ENCODE measurements at regions of chr16 and their contacts with region 1.

Region 1: DNA sequence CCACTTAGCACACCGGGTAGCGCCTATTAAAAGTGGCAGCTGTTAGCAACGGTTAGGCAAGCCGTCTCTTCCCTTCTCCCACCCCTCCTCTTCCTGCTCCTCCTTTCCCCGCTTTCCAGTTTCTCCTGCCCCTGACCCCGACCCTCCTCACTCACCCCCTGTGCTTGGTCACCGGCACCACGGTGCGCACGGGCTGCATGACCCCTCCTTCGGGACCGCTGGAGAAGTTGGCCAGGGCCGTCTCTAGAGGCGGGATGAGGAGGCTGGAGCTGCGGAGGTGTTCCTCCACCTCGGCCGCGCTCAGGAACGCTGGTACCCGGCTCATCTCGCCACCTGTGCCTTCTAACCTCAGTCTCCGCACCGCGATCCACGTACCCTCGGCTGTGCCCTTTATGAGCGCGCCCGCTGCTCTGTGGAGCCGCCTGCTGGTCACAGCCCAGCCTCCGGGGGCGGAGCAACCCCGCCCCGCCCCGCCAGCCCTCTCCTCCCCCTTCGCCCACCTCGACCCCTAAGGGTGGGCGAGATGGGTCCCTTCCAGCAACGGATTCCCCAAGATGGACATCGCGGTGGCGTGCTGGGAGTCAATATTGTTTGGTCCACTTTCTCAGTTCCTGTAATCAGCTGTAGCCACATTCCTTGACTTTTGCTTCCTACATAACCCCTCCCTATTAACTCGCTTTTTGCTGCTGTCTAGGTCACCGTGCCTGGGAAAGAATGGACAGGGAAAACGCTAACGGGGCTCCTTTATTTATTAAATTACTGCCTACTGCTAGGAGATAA is at the start of gene CRYM:
- DNase-seq: peak; percentile 12
- H3K4me3 ChIP-seq: peak within 1 kb of the TSS; percentile 37
- H3K27ac ChIP-seq: no peak within 1 kb of the TSS
- H3K27me3 ChIP-seq: peaks cover 40% of the 10 kb centered on the region
- CTCF ChIP-seq: peak; percentile 80

Region 2: GRCh38 chr16:21194771-21195301 is 83.3 kb before region 1 on chr16:
- in situ Hi-C with region 1: loop called (anchors 25 kb)
- DNase-seq: peak; percentile 24
- H3K4me3 ChIP-seq: no peak overlapping the region
- H3K27ac ChIP-seq: no peak overlapping the region
- H3K27me3 ChIP-seq: peaks cover 3% of the 10 kb centered on the region
- CTCF ChIP-seq: no peak

Region 3: DNA sequence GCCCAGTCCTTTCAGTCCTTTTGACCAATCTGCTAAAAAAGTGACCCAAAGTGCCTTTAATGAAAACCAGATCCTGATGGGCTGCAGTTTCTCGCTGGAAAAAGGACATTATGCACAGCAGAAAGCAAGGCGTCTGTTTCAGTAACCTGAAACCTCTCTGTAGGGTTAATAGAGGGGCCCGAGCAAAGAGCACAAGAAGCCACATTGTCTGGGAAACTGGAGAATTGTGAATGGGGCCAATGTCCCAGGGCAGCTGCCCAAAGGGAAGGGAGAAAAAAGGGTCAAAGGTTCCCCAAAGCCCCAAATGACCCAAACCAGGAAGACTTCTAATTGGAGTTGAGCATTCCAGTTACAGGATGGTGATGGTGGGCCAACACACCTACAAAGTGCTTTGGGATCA is 388.7 kb after region 1 on chr16:
- in situ Hi-C with region 1: no loop called
- DNase-seq: no peak
- H3K4me3 ChIP-seq: no peak overlapping the region
- H3K27ac ChIP-seq: no peak overlapping the region
- H3K27me3 ChIP-seq: no peaks in the 10 kb centered on the region
- CTCF ChIP-seq: no peak